Calu3 (cell line): ENCODE measurements at regions of chr17 and their contacts with region 1.

Region 1: GRCh38 chr17:32806646-32807045 is 70.3 kb downstream of the MYO1D start:
- DNase-seq: peak; percentile 33
- H3K4me3 Mint-ChIP-seq: no peak overlapping the region
- H3K27ac Mint-ChIP-seq: peak overlapping the region; percentile 69
- H3K4me1 Mint-ChIP-seq: peaks cover 36% of the 10 kb centered on the region
- H3K27me3 Mint-ChIP-seq: no peaks in the 10 kb centered on the region
- CTCF ChIP-seq: no peak

Region 2: DNA sequence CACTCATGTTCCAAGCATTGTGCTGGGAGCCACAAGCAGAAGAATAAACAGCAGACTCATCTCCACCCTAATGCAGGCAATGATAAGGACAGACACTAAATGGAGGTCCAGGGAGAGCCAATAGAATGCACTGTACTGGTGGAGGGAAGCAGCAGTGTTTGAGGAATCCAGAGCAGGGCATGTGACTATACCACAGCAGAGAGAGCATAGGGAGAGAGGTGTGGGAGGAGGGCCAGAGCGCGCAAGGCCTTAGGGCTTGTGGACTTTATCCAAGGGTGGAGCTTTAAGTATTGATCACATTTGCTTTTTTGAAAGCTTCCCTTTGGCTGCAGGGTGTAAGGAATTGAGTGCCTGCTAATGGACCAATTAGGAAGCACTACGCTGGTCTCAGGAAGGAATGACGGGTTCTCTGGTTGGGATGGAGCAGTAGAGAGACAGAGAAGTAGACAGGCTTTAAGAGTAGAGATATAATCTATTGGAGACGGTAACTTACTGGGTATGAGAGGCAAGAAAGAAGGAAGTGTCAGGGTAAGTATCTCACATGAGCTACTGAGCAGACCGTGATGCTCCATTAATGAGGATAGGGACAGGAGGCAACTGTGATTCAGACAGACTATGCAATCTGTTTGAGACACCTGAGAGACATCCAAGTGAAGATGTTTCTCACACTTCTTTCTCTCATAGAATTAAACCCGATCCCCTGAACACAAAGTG is 12.0 kb before region 1 on chr17:
- CTCF ChIA-PET with region 1: interaction called, 8 read pairs
- intact Hi-C with region 1: loop called (anchors 1 kb)
- DNase-seq: peak; percentile 71
- H3K4me3 Mint-ChIP-seq: peak overlapping the region; percentile 51
- H3K27ac Mint-ChIP-seq: peak overlapping the region; percentile 75
- H3K4me1 Mint-ChIP-seq: peaks cover 38% of the 10 kb centered on the region
- H3K27me3 Mint-ChIP-seq: no peaks in the 10 kb centered on the region
- CTCF ChIP-seq: no peak

Region 3: GRCh38 chr17:32827227-32827626 is 20.6 kb after region 1 on chr17:
- CTCF ChIA-PET with region 1: interaction called, 6 read pairs
- intact Hi-C with region 1: loop called (anchors 2 kb)
- DNase-seq: no peak
- H3K4me3 Mint-ChIP-seq: no peak overlapping the region
- H3K27ac Mint-ChIP-seq: peak overlapping the region; percentile 77
- H3K4me1 Mint-ChIP-seq: peaks cover 33% of the 10 kb centered on the region
- H3K27me3 Mint-ChIP-seq: no peaks in the 10 kb centered on the region
- CTCF ChIP-seq: no peak